Posterior cingulate gyrus (tissue), 11 donors: ENCODE measurements at regions of chr9 and their contacts with region 1.

Region 1: GRCh38 chr9:129482521-129483414 is 138.1 kb downstream of the C9orf50 start:
- DNase-seq: peak; percentile 60 to 93 (median 70)

Region 2: DNA sequence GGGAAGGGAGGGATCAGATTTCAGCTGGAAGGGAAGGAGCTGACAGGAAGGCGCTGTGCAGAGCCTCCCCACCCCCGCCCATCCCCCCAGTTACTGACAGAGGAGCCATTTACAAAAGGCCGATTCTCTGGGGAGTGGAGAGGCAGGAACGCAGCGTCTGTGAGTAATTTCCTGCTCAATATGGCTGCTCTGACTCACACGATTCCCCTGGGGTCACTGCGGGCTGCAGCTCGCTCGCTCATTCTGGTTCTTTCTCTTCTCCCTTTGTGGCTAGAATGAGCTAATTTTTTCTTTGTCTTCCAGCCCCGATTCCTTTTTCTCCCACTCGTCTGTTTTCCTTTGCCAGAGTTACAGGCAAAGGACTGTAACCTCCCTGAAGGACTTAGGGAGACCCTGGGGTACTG is 342.8 kb before region 1 on chr9:
- intact Hi-C with region 1: no loop called
- DNase-seq: peak; percentile 66 to 96 (median 79)

Region 3: DNA sequence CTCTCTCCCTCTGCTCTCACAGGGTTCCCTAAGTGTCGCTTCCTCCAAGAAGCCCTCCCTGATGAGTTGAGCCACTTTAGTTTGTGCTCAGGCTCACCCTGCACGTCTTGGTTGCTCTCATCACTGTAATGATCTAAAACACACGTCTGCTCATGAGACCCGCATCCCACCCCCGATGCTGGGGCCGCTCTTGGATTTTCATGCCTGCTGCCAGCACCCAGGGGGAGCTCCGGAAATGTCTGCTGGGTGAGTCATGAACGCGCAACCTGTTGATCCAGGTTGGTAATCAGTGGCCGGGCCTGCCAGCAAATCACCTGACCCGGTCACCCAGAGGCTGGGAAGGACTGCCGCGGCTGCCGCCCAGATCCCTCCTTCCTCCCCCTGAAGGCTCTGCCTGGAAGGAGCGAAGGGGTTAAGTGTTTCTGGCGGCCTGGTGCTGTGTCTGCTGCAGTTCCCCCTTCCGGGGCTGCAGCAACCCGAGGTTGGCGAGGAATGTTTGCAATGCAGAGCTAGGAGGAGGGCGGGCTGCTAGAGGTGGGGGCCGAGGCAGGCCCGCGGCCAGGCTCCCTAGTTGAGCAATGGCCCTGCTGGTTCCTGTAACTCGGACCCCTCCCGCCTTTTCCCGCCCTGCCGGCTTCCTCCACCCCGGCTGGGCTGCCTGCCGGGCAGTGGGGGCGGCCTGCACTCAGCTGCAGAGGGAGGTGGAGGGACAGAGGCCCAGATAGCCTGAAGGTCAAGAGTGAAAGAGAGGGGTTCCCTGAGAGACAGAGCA is 148.6 kb before region 1 on chr9:
- intact Hi-C with region 1: loop called (anchors 10 kb)
- DNase-seq: peak in 9 of 10 donors; percentile 43 to 96 (median 65)

Region 4: GRCh38 chr9:129413537-129414376 is 69.0 kb before region 1 on chr9:
- intact Hi-C with region 1: loop called (anchors 5 kb)
- DNase-seq: peak; percentile 96 to 100 (median 98)

Region 5: DNA sequence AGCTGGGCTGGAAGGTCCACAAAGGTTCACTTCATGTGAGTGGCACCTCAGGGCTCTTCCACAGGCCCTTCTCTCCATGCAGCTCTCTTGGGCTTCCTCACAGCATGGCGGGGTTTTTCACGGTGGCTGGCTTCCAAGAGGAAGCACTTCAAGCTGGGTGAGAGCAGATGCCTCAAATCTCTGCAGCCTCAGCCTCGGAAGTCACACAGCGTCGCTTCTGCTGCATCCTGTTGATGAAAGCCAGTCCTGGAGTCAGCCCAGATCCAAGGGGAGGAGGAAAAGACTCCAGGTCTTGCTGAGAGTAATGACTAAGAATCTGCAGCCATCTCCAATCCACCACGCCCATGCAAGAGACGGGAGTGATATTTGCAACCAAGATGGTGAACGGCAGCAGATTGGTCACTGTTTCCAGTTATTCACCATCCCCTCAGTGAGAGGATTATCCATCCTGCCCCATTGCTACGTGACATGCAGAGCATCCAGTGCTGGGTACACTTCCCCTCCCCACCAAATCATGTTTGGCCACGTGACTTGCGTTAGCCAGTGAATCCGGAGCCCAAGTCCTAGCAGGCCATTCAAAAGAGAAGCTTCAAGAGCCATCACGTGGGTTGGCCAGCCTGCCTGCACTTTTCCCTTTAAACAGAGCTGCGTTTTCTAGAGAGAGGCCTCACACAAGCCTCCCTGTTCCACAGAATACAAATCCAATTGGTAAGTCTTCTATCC is 35.8 kb before region 1 on chr9:
- intact Hi-C with region 1: no loop called
- DNase-seq: peak in 9 of 10 donors; percentile 58 to 94 (median 72)

Region 6: DNA sequence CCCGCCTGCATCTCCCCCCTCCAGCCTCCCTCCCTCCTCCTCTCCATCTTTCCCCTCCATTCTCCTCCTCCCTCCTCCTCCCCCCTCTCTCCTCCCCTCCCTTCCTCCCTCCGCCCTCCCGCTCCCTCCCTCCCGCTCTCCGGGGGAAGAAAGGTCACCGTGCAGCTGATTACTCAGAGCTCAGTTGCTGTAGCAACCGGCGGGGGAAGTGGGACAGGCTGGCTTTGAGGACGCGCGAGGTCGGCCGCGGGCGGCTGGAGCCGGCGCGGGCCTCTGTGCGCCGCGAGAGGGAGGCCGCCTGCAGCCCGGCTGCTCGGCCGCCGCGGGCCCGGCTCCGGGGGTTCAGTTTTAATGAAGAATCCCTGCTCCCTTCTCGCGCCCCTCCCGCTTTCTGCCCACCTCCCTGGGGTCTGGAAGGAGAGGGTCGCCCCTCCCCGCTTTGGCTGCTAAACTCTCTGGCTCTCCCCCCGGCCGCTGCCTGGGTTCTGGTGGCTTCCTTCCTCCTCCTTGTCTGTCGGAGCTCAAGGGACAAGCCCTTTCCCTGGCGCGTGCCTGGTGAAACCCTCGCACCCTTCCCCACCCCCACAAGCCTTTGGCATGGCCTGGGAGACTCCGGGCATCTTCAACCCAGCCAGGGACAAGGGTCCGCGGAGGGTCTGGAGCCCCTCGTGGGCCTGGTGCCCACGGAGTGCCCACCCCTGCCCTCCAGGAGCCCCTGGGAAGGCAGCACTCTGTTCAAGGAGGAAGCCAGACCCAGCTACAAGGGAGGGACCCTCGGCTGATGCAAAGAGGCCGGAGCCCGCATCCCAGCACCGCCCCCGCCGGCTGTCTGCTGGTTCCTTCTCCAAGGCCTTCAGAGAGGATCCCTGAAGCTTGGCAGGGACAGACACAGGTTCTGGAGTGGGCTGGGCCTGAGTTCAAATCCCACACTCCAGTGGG is 22.2 kb before region 1 on chr9:
- intact Hi-C with region 1: loop called (anchors 2 kb)
- DNase-seq: peak; percentile 94 to 99 (median 96)

Region 7: DNA sequence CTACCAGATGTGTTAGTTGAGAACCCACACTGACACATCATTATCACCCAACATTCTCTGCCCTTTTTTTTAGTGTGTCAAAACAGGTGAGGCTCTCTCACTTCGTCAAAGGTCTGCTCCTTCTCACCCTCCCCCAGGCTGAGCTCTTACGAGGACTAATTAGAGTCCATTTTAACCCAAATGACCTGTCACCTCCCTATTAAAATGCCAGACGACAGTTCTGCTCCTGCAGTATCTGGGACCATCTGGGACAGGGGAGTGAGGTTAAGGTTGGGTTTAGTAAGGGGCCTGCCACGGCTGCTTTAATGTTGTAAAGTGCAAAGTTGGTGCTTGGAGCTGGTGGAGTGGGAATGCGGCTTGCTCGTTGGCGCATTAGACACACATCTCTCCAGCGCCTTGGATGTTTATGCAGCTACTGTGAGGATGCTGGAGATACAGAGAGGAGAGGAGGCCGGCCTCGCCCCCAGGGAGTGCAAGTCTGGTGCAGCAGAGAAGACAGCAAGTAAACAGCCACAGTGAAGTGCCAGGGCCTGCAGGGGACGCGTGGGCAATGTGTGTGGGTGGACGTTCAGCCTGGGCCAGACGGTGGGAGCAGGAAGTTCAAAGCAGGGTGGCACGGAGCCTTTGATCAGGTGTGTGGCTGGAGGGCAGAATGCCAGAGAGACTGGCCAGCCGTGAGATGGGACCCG is 42.0 kb after region 1 on chr9:
- intact Hi-C with region 1: no loop called
- DNase-seq: peak in 2 of 10 donors; percentile 56 to 63

Region 8: DNA sequence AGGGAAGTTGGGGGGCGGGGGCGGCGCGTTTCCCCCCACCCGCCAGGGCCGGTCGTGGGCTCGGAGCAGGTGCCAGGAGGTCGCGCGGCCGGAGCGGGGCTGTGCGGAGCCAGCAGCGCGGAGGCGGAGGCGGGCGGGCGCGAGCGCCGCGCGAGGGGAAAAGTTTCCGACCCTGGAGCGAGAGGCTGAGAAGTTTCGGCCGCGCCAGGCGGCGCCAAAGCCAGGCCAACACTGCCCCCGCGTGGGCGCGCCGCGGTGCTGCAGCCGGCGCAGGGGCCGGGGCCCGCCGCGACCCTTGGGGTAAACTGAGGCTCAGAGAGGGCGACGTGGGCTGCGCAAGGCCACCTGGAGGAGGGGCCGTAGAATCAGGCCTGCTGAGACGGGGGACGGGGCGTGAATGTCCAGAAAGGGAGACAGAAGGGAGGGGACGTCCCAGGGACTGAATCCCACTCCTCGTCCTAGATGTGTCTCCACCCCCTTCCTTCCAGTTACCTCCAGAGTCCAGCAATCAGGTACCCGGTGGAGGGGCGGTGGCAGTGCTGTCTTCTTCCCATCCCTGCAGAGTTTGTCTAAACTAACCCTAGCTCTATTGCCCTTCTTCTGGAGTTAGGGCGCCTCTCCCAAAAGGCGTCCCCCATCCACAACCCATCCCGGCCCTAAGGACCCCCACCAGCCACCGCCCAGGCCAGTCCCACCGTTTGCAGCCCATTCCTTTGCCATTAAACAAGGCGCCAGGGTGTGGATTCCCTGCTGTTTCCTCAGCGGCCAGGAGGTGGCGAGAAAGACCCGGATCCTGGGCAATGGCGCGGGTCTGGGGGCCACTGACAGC is 127.9 kb after region 1 on chr9:
- intact Hi-C with region 1: loop called (anchors 5 kb)
- DNase-seq: peak; percentile 54 to 96 (median 78)

Region 9: GRCh38 chr9:129981180-129981907 is 498.6 kb after region 1 on chr9:
- intact Hi-C with region 1: no loop called
- DNase-seq: peak in 8 of 10 donors; percentile 18 to 93 (median 60)